ENCODE measurements at regions of chr14 and their contacts with region 1.

Region 1: DNA sequence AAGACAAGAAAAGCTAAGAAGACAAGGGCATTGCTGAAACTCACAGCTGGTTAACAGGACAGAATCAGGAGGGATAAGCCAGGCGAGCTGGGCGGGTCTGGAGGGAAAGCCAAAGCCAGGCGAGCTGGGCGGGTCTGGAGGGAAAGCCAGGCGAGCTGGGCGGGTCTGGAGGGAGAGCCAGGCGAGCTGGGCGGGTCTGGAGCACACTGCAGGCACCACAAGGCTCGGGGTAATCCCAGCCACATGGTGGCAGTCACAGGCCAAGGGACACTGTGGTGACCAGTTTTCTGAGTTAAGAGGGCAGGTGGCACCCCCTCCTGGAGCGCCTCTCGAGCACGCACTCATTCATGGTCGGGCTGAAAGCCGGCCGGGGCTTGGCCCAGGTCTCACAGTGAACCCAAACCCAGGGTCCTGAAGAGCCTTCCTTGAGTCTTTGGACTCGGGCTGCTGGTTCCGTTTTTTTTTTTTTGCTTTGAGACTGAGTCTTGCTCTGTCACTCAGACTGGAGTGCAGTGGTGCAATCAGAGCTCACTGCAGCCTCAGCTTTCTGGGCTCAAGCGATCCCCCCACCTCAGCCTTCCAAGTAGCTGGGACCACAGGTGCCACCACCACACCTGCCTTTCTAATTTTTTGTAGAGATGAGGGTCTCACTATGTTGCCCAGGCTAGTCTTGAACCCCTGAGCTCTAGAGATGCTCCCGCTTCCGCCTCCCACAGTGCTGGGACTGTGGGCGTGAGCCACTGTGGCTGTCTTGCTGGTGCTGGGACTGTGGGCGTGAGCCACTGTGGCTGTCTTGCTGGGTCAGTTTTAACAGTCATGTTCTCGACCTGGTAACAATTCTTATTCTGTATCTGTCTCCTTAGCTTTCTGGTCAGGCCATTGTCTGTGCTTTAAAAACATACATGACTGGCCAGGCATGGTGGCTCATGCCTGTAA is 40.2 kb downstream of the HSP90AA1 start:
- DNase-seq: peak; percentile 88 to 96
- ATAC-seq: peak; percentile 83 to 89 (median 86)
- H3K4me3 ChIP-seq: no peak overlapping the region
- H3K27ac ChIP-seq: peak overlapping the region; percentile 77
- H3K4me1 ChIP-seq: peaks cover 41% of the 10 kb centered on the region
- H3K27me3 ChIP-seq: no peaks in the 10 kb centered on the region
- CTCF ChIP-seq: peak; percentile 59

Region 2: DNA sequence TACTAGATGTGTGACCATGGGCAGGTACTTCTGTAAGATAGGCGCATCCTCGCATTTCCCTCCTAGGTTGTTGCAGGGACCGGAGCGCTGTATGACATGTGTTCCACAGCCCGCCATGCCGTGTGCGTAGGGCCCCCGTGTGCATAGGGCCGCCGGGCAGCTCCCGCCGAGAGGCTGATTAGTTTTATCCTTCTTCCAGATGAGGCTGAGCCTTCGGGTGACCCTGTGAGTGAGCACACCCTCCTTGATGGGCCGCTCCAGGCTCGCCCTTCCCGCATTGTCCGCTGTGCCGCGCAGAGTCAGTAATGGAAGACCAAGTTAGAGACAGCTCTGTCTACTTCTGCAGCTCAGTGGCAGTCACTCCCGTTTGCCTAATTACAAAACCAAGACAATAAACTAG is 155.1 kb before region 1 on chr14:
- intact Hi-C with region 1: no loop called
- DNase-seq: no peak
- ATAC-seq: no peak
- H3K4me3 ChIP-seq: no peak overlapping the region
- H3K27ac ChIP-seq: no peak overlapping the region
- H3K4me1 ChIP-seq: no peaks in the 10 kb centered on the region
- H3K27me3 ChIP-seq: no peaks in the 10 kb centered on the region
- CTCF ChIP-seq: no peak

Region 3: DNA sequence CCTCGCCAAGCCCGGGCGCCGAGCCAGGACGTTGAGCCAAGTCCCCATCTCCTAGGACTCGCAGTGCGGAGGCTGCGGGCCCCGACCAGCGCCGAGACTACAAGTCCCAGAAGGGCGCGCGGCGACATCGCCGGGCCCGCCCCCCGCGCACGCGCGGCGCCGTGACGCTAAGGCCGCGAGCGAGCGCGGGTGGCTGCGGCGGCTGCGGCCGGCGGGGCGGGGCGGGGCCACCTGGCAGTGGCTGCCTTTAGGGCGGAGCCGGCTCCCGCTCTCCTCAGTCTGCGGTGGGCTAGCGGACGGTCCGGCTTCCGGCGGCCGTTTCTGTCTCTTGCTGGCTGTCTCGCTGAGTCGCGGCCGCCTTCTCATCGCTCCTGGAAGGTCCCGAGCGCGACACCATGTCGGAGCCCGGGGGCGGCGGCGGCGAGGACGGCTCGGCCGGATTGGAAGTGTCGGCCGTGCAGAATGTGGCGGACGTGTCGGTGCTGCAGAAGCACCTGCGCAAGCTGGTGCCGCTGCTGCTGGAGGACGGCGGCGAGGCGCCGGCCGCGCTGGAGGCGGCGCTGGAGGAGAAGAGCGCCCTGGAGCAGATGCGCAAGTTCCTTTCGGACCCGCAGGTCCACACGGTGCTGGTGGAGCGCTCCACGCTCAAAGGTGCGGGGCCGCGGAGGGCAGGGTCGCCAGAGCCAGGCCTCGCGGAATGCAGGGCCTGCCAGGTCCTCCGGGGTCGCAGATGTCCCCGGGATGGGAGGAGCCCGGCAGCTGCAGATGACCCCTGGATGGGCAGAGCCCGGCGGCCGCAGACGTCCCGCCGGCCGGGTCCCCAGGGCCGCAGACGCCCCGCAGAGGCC is 82.1 kb before region 1 on chr14 and contains the start of gene DYNC1H1:
- intact Hi-C with region 1: loop called in 1 of 2 experiments (anchors 5 kb)
- DNase-seq: peak; percentile 97
- ATAC-seq: peak; percentile 87 to 92 (median 90)
- H3K4me3 ChIP-seq: peak within 1 kb of the TSS; percentile 98
- H3K27ac ChIP-seq: peak within 1 kb of the TSS; percentile 96
- H3K4me1 ChIP-seq: peaks cover 32% of the 10 kb centered on the region
- H3K27me3 ChIP-seq: no peaks in the 10 kb centered on the region
- CTCF ChIP-seq: no peak
- total RNA-seq, gene DYNC1H1: 332 to 634 (median 549) TPM

Region 4: GRCh38 chr14:102086972-102087761 is 40.6 kb after region 1 on chr14 and contains the start of gene HSP90AA1:
- intact Hi-C with region 1: loop called in 1 of 2 experiments (anchors 2 kb)
- DNase-seq: peak; percentile 95 to 98
- ATAC-seq: peak; percentile 90 to 94 (median 92)
- H3K4me3 ChIP-seq: peak within 1 kb of the TSS; percentile 80
- H3K27ac ChIP-seq: peak within 1 kb of the TSS; percentile 97
- H3K4me1 ChIP-seq: peaks cover 42% of the 10 kb centered on the region
- H3K27me3 ChIP-seq: no peaks in the 10 kb centered on the region
- CTCF ChIP-seq: peak; percentile 12
- total RNA-seq, gene HSP90AA1: 398 to 659 (median 540) TPM

Region 5: DNA sequence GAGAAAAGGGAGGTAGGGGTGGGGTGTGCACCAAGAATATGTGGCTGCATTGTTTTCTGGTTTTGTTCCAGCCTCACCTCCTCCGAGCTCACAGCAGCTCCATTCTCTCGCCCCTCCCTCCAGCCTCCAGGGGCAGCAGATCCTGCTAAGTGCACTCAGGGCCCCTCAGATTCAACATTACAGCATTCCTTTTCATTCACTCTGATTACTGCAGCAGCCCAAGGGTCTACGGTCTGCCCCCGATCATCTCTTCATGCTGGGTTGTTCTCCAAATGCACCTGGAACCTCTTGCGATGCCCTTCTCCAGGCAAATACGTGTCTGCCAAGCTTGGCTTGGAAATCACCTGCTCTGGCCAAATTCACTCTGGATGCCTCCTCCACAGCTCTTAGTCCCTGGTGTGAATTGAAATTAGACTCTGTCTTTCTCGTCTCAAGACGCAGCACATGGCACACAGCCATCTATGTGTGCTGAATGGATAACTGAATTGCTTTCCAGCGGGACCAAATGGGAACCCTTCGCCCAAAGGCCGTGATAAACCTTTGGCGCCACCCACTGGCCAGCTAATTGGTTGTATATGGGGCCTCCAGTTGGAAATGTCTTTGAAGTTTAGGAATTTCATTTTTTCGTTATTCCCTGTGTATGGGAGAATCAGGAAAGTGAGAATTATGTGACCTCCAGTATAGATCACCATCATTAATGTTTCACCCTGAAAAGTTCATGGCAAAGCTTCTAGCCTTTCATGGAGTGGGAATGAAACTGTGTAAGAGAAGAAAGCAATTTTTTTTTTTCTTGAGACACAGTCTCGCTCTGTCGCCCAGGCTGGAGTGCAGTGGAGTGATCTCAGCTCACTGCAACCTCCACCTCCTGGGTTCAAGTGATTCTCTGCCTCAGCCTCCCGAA is 49.9 kb after region 1 on chr14:
- intact Hi-C with region 1: loop called in 1 of 2 experiments (anchors 1 kb)
- DNase-seq: peak; percentile 88 to 93
- ATAC-seq: peak; percentile 85 to 98 (median 88)
- H3K4me3 ChIP-seq: no peak overlapping the region
- H3K27ac ChIP-seq: no peak overlapping the region
- H3K4me1 ChIP-seq: peaks cover 10% of the 10 kb centered on the region
- H3K27me3 ChIP-seq: no peaks in the 10 kb centered on the region
- CTCF ChIP-seq: peak; percentile 84

Region 6: GRCh38 chr14:102591889-102592763 is 545.5 kb after region 1 on chr14 and contains the start of gene RCOR1:
- intact Hi-C with region 1: no loop called
- DNase-seq: peak; percentile 99
- ATAC-seq: peak; percentile 93 to 95 (median 94)
- H3K4me3 ChIP-seq: peak within 1 kb of the TSS; percentile 93
- H3K27ac ChIP-seq: peak within 1 kb of the TSS; percentile 88
- H3K4me1 ChIP-seq: peaks cover 11% of the 10 kb centered on the region
- H3K27me3 ChIP-seq: no peaks in the 10 kb centered on the region
- CTCF ChIP-seq: no peak
- total RNA-seq, gene RCOR1: 11.6 to 17.7 (median 15.8) TPM

Measured in psoas muscle (tissue), 8 donors.